ENCODE measurements at regions of chr1 and their contacts with region 1.

Region 1: DNA sequence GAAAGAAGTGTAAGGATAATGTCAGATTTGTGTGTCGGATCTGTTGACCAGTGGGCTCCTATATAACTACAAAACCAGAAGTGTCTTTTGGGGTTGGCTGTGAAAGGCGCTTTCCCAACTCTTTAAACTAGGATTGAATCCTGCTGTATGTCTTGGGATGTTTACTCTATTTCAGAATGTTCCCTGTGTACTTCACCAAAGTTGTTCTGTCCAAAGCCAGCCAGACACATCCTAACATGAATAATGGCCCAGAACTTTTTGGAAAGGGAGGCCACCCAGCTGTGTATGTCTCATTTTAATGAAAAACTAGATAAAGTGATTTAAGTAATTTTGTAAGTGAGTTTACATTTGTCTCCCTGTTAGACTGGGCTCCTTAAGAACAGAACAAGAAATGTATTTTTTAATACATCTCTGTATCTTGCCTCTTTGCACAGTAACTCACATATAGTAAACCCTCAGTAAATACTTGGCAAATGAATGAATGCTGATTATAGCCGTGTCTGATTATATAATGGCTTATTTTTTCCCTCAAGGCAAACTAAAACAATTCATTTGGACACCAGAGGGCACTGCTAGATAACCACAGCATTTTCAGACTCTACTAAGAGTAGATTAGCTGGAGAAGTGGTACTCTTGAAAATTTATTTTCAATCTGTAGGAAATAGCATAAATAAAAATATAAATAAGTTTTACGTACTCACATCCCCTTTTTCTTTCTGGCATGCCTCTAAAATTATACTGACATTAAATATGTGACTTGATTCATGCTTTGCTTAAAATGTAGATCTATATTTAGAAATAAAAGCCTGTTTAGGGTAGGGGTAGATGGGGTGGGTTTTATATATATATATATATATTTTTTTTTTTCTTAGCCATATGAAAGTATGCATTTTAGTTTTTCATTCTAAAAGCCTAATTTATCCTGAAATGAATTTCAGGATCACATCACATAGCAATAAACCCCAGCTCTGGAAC is 23.8 kb downstream of the TSEN15 start:
- DNase-seq: peak; percentile 58
- H3K4me3 ChIP-seq: no peak overlapping the region
- H3K27ac ChIP-seq: peak overlapping the region; percentile 51 to 75
- H3K4me1 ChIP-seq: no peaks in the 10 kb centered on the region
- H3K27me3 ChIP-seq: no peaks in the 10 kb centered on the region
- CTCF ChIP-seq: peak; percentile 58 to 73 (median 72)
- POLR2A ChIP-seq: no peak

Region 2: GRCh38 chr1:184222652-184223052 is 147.3 kb after region 1 on chr1:
- intact Hi-C with region 1: loop called (anchors 10 kb)
- DNase-seq: peak; percentile 49
- H3K4me3 ChIP-seq: no peak overlapping the region
- H3K27ac ChIP-seq: no peak overlapping the region
- H3K4me1 ChIP-seq: no peaks in the 10 kb centered on the region
- H3K27me3 ChIP-seq: no peaks in the 10 kb centered on the region
- CTCF ChIP-seq: peak; percentile 88 to 94 (median 94)
- POLR2A ChIP-seq: no peak

Region 3: GRCh38 chr1:184664042-184664655 is 588.8 kb after region 1 on chr1:
- intact Hi-C with region 1: loop called (anchors 10 kb)
- DNase-seq: peak; percentile 90
- H3K4me3 ChIP-seq: peak overlapping the region; percentile 16 to 56
- H3K27ac ChIP-seq: peak overlapping the region in 1 of 2 donors; percentile 63
- H3K4me1 ChIP-seq: peaks cover 7% of the 10 kb centered on the region
- H3K27me3 ChIP-seq: no peaks in the 10 kb centered on the region
- CTCF ChIP-seq: peak; percentile 84 to 93 (median 92)
- POLR2A ChIP-seq: no peak

Measured in testis (tissue), 5 donors.